Activated T-helper 1 cell treated with anti-CD3 and anti-CD28 coated beads, Interleukin-12 subunit alpha, Interleukin-12 subunit beta, Interleukin-2, Interleukin-4 antibody, amounts not matched to agents 30 ng/mL and 10 ng/mL and 1 ng/mL, durations not matched to agents 14 hours and 24 hours and 36 hours (primary cell): ENCODE measurements at regions of chr15 and their contacts with region 1.

Region 1: GRCh38 chr15:49155110-49155833 is at the start of gene COPS2:
- DNase-seq: peak; percentile 93
- H3K4me3 Mint-ChIP-seq: peak within 1 kb of the TSS; percentile 99
- H3K27ac Mint-ChIP-seq: peak within 1 kb of the TSS; percentile 99
- H3K4me1 Mint-ChIP-seq: peaks cover 47% of the 10 kb centered on the region
- H3K27me3 Mint-ChIP-seq: peaks cover 3% of the 10 kb centered on the region
- total RNA-seq, gene COPS2: 99.7 and 105 TPM in 2 replicates

Region 2: GRCh38 chr15:48330855-48331795 is 824.1 kb before region 1 on chr15 and contains the start of gene DUT:
- intact Hi-C with region 1: loop called (anchors 5 kb)
- DNase-seq: peak; percentile 81
- H3K4me3 Mint-ChIP-seq: peak within 1 kb of the TSS; percentile 100
- H3K27ac Mint-ChIP-seq: peak within 1 kb of the TSS; percentile 99
- H3K4me1 Mint-ChIP-seq: peaks cover 46% of the 10 kb centered on the region
- H3K27me3 Mint-ChIP-seq: no peaks in the 10 kb centered on the region
- total RNA-seq, gene DUT: 244 and 252 TPM in 2 replicates

Region 3: DNA sequence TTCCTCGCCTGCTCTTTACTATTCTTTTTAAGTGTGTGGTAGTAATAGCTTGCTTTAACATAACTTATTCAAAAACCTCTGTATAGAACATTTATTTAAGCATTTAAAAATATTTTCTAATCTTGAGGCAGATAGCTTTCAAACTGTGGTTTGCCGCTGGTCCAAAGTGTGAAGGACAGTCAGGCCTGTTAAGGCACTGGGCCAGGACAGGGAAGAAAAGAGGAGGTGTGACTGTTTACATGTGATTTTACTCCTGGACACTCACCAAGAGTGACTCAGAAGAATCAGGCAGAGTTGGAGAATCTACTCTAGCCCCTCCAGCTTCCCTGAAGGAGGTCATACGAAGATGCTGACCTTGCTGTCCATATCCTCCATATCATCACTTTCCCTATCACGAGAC is 389.1 kb before region 1 on chr15:
- intact Hi-C with region 1: no loop called
- DNase-seq: no peak
- H3K4me3 Mint-ChIP-seq: no peak overlapping the region
- H3K27ac Mint-ChIP-seq: no peak overlapping the region
- H3K4me1 Mint-ChIP-seq: peaks cover 11% of the 10 kb centered on the region
- H3K27me3 Mint-ChIP-seq: no peaks in the 10 kb centered on the region

Region 4: GRCh38 chr15:48877630-48878595 is 277.4 kb before region 1 on chr15 and contains the start of gene EID1:
- intact Hi-C with region 1: loop called (anchors 1 kb)
- DNase-seq: peak; percentile 94
- H3K4me3 Mint-ChIP-seq: peak within 1 kb of the TSS; percentile 99
- H3K27ac Mint-ChIP-seq: peak within 1 kb of the TSS; percentile 97
- H3K4me1 Mint-ChIP-seq: peaks cover 69% of the 10 kb centered on the region
- H3K27me3 Mint-ChIP-seq: no peaks in the 10 kb centered on the region
- total RNA-seq, gene EID1: 177 and 183 TPM in 2 replicates

Region 5: GRCh38 chr15:49169880-49170597 is 14.8 kb after region 1 on chr15 and contains the start of gene GALK2:
- intact Hi-C with region 1: loop called (anchors 1 kb)
- DNase-seq: peak; percentile 82
- H3K4me3 Mint-ChIP-seq: peak within 1 kb of the TSS; percentile 97
- H3K27ac Mint-ChIP-seq: peak within 1 kb of the TSS; percentile 96
- H3K4me1 Mint-ChIP-seq: peaks cover 39% of the 10 kb centered on the region
- H3K27me3 Mint-ChIP-seq: no peaks in the 10 kb centered on the region
- total RNA-seq, gene GALK2: 22.3 and 23.5 TPM in 2 replicates

Region 6: DNA sequence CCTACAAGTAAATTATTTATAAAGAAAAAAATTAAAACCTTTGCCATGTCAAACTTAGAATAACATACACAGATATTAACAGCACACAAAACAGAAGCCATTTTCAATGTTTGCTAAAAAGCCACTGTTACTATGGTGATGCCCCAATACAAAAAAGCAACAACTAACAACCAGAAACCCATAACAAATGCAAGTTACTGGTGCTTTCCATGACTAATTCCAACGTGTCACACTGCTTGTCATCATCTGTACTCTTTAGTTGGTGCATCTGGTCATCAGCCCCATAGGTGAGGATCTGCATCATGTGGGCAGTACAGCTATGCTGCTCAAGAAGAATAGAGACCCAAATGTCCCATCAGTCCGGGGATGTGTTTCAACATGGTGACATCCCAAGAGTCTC is 910.9 kb after region 1 on chr15:
- intact Hi-C with region 1: loop called (anchors 10 kb)
- DNase-seq: peak; percentile 44
- H3K4me3 Mint-ChIP-seq: peak overlapping the region; percentile 45
- H3K27ac Mint-ChIP-seq: peak overlapping the region; percentile 92
- H3K4me1 Mint-ChIP-seq: peaks cover 62% of the 10 kb centered on the region
- H3K27me3 Mint-ChIP-seq: no peaks in the 10 kb centered on the region

Region 7: DNA sequence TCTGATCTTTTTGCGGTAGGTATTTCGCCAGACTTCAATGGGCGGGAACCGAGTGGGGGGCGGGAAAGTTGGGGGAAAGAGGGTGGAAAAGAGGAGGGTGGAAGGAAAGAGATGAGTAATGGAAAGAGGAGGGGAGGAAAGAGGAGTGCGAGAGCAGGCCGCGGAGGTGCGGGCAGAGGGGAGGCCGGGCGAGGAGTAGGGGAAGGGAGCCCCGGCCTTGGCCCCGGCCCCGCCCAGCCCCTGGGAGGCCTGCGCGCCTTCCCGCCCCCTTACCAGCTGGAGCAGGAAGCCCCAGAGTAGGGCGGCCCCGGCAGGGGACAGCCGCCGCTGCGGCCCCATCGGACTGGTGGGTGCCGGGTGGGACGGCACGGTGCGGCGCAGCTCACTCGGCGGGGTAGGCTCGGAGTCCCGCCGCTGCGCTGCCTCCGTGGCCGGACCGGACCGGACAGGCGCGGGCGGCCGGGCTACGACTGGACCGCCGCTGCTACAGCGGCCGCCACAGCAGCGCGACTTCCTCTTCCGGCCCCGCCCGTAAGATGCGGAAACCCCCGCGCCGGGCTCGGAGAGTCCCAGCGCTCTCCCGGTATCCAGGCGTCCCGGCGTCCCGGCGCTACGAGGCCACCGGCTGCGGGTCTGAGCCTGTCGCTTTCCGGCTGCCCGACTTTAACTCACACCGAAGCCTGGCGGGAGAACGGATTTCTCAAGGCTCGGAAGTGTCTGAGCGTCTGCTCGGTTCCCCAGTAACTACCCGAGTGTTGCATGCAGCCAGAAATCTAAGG is 1610.1 kb after region 1 on chr15 and contains the start of gene SPPL2A:
- intact Hi-C with region 1: loop called (anchors 5 kb)
- DNase-seq: peak; percentile 77
- H3K4me3 Mint-ChIP-seq: peak within 1 kb of the TSS; percentile 96
- H3K27ac Mint-ChIP-seq: peak within 1 kb of the TSS; percentile 97
- H3K4me1 Mint-ChIP-seq: peaks cover 69% of the 10 kb centered on the region
- H3K27me3 Mint-ChIP-seq: no peaks in the 10 kb centered on the region
- total RNA-seq, gene SPPL2A: 100 and 103 TPM in 2 replicates